ENCODE measurements at regions of chr12 and their contacts with region 1.

Region 1: GRCh38 chr12:19482551-19483109 is 43.3 kb downstream of the AEBP2 start:
- DNase-seq: peak; percentile 78
- ATAC-seq: peak; percentile 90
- H3K4me3 Mint-ChIP-seq: peak overlapping the region; percentile 14
- H3K27ac Mint-ChIP-seq: peak overlapping the region; percentile 83
- H3K4me1 Mint-ChIP-seq: peaks cover 58% of the 10 kb centered on the region
- H3K27me3 Mint-ChIP-seq: no peaks in the 10 kb centered on the region

Region 2: DNA sequence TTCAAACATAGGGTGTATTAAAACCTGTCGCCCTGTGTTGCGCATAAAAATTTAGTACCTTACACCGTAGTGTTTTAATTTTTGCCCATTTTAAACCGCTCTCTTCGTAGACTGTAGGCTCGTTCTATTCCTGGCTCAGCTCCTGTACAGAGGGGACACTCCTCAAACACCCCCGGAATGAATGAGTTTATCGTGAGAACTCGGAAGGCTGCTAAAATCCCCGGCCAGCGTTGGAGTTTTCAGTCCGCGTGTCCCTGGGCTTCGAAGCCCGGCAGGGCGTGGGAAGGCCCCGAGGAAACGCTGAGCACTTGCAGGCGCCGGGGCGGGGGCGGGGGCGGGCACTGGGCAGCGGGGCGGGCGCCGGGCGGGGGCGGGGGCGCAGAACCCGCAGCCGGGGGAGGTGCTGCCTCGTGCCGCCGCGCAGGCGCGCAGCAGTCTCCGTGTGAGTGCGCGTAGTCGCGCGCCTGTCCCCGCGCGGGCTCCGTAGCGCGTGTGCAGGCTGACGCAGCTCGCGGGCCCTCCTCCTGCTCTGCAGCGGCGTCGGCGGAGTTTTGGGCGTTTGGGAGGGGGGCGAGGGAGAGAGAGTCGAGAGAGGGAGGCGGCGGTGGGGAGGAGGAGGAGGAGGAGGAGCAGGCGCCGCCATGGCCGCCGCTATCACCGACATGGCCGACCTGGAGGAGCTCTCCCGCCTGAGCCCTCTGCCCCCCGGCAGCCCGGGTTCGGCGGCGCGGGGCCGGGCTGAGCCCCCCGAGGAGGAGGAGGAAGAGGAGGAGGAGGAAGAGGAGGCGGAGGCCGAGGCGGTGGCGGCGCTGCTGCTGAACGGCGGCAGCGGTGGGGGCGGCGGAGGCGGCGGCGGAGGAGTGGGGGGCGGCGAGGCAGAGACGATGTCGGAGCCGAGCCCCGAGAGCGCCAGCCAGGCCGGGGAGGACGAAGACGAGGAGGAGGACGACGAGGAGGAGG is 43.3 kb before region 1 on chr12 and contains the start of gene AEBP2:
- CTCF ChIA-PET with region 1: no interaction called
- POLR2A ChIA-PET with region 1: no interaction called
- intact Hi-C with region 1: loop called (anchors 2 to 5 kb)
- DNase-seq: peak; percentile 93
- ATAC-seq: peak; percentile 84
- H3K4me3 Mint-ChIP-seq: peak within 1 kb of the TSS; percentile 98
- H3K27ac Mint-ChIP-seq: peak within 1 kb of the TSS; percentile 98
- H3K4me1 Mint-ChIP-seq: peaks cover 36% of the 10 kb centered on the region
- H3K27me3 Mint-ChIP-seq: no peaks in the 10 kb centered on the region
- total RNA-seq, gene AEBP2: 44.2 to 52.9 TPM

Region 3: GRCh38 chr12:19464192-19464580 is 18.4 kb before region 1 on chr12:
- CTCF ChIA-PET with region 1: no interaction called
- POLR2A ChIA-PET with region 1: no interaction called
- intact Hi-C with region 1: no loop called
- DNase-seq: no peak
- ATAC-seq: no peak
- H3K4me3 Mint-ChIP-seq: no peak overlapping the region
- H3K27ac Mint-ChIP-seq: no peak overlapping the region
- H3K4me1 Mint-ChIP-seq: peaks cover 18% of the 10 kb centered on the region
- H3K27me3 Mint-ChIP-seq: no peaks in the 10 kb centered on the region

Region 4: DNA sequence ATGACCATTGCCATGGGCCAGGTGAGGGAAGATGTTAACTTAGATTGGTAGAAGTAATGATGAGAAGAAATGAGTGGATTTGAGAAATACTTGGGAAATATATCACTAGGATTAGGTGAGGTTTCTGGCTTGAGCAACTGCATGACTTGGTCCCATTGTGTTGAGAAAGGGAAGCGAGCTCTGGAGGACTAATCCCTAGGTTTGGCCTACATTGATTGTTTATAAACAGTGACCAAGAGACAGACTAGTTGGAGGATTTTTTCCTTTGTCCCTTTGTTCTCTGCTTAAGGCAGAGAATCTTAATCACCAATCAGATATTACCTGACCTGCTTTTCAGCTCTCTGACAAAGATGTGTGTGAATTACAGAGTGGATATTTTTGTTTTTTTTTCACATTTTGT is 57.2 kb after region 1 on chr12:
- CTCF ChIA-PET with region 1: no interaction called
- POLR2A ChIA-PET with region 1: interaction called, 12 read pairs
- intact Hi-C with region 1: no loop called
- DNase-seq: no peak
- ATAC-seq: no peak
- H3K4me3 Mint-ChIP-seq: no peak overlapping the region
- H3K27ac Mint-ChIP-seq: no peak overlapping the region
- H3K4me1 Mint-ChIP-seq: no peaks in the 10 kb centered on the region
- H3K27me3 Mint-ChIP-seq: no peaks in the 10 kb centered on the region